Panc1 (cell line): ENCODE measurements at regions of chr14 and their contacts with region 1.

Region 1: GRCh38 chr14:21343035-21343794 is 40.6 kb downstream of the SUPT16H start:
- DNase-seq: no peak
- ATAC-seq: no peak
- H3K4me3 ChIP-seq: 0 out of 4 replicates have a peak overlapping the region, but pooled peaks of 1 of the 2 experiments have one; percentile 11
- H3K27ac ChIP-seq: no peak overlapping the region
- H3K4me1 ChIP-seq: no peaks in the 10 kb centered on the region
- H3K27me3 ChIP-seq: no peaks in the 10 kb centered on the region
- CTCF ChIP-seq: no peak

Region 2: GRCh38 chr14:21269252-21270046 is 73.8 kb before region 1 on chr14 and contains the start of gene HNRNPC:
- CTCF ChIA-PET with region 1: no interaction called
- POLR2A ChIA-PET with region 1: no interaction called
- in situ Hi-C with region 1: no loop called
- intact Hi-C with region 1: loop called (anchors 1 kb)
- DNase-seq: peak; percentile 99
- ATAC-seq: peak; percentile 97
- H3K4me3 ChIP-seq: peak within 1 kb of the TSS; percentile 70 to 86
- H3K27ac ChIP-seq: peak within 1 kb of the TSS; percentile 98
- H3K4me1 ChIP-seq: peaks cover 15% of the 10 kb centered on the region
- H3K27me3 ChIP-seq: no peaks in the 10 kb centered on the region
- CTCF ChIP-seq: no peak
- total RNA-seq, gene HNRNPC: 537 TPM